ENCODE measurements at regions of chr10 and their contacts with region 1.

Region 1: GRCh38 chr10:129466703-129467358 is at the start of gene MGMT:
- DNase-seq: peak; percentile 25
- ATAC-seq: peak; percentile 96
- H3K4me3 ChIP-seq: peak within 1 kb of the TSS; percentile 89
- H3K27ac ChIP-seq: peak within 1 kb of the TSS; percentile 76
- H3K4me1 ChIP-seq: peaks cover 11% of the 10 kb centered on the region
- H3K27me3 ChIP-seq: no peaks in the 10 kb centered on the region
- CTCF ChIP-seq: no peak
- EP300 ChIP-seq: no peak
- POLR2A ChIP-seq: peak; percentile 97
- RAD21 ChIP-seq: no peak
- polyA plus RNA-seq, gene MGMT: 1.7 to 4.1 TPM

Region 2: DNA sequence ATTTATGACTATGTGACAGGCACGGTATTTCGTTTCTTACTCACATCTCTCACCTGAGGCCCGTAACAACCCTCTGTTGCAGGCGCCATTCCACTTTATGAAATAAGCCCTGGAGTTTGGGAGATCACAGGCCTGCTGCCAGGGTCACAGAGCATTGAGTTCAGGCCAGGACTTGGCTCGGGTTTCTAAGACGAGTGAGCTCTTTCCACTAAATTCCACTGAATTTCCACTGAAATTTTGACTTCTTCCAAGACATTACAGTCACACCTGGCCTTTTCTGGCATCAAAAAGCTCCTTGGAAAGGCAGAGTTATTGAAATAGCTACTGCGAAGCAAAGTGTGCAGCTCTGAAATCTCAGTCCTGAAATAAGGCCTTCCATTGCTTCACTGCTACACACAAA is 282.6 kb before region 1 on chr10:
- CTCF ChIA-PET with region 1: no interaction called
- POLR2A ChIA-PET with region 1: no interaction called
- RAD21 ChIA-PET with region 1: no interaction called
- SMC1A ChIA-PET with region 1: no interaction called
- in situ Hi-C with region 1: no loop called
- intact Hi-C with region 1: no loop called
- DNase-seq: no peak
- ATAC-seq: no peak
- H3K4me3 ChIP-seq: no peak overlapping the region
- H3K27ac ChIP-seq: no peak overlapping the region
- H3K4me1 ChIP-seq: no peaks in the 10 kb centered on the region
- H3K27me3 ChIP-seq: no peaks in the 10 kb centered on the region
- CTCF ChIP-seq: no peak
- EP300 ChIP-seq: no peak
- POLR2A ChIP-seq: no peak
- RAD21 ChIP-seq: no peak

Region 3: DNA sequence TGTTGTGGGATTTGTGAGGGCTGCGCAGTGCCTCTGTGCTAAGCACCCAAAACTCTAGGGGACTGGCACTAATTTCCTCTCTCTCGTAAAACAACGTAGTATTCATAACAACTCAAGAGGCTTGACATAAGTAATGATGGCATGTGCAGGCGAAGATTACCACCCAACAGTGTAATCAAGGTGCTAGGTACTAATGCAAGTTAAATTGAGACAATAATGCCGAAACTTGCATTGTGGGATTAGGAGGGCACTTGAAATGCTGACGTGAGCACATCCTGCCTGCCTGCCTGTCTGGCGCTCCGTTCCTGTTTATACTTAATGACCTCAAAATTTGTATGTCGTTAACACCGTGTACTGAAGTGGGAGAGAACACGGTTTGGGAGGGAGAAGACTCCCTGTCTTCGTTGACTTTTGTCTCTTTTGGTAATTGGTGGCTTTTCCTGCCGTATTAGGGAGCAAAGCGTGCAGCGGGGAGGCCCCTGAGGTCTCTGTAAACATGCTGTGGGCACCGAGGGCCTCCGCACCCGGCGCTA is 139.2 kb after region 1 on chr10:
- CTCF ChIA-PET with region 1: no interaction called
- POLR2A ChIA-PET with region 1: no interaction called
- RAD21 ChIA-PET with region 1: no interaction called
- SMC1A ChIA-PET with region 1: no interaction called
- in situ Hi-C with region 1: no loop called
- intact Hi-C with region 1: loop called (anchors 5 kb)
- DNase-seq: peak; percentile 72
- ATAC-seq: peak; percentile 62
- H3K4me3 ChIP-seq: peak overlapping the region; percentile 38; the same call in 1 of the 2 replicates
- H3K27ac ChIP-seq: peak overlapping the region; percentile 51
- H3K4me1 ChIP-seq: peaks cover 36% of the 10 kb centered on the region
- H3K27me3 ChIP-seq: no peaks in the 10 kb centered on the region
- CTCF ChIP-seq: no peak
- EP300 ChIP-seq: peak; percentile 70 to 81; a peak in 3 of 4 replicates
- POLR2A ChIP-seq: no peak
- RAD21 ChIP-seq: no peak